Activated naive CD8-positive, alpha-beta T cell treated with anti-CD3 and anti-CD28 coated beads, Interleukin-2, amount 10 ng/mL, durations not matched to agents 7 days and 5 days (primary cell): ENCODE measurements at regions of chr5 and their contacts with region 1.

Region 1: DNA sequence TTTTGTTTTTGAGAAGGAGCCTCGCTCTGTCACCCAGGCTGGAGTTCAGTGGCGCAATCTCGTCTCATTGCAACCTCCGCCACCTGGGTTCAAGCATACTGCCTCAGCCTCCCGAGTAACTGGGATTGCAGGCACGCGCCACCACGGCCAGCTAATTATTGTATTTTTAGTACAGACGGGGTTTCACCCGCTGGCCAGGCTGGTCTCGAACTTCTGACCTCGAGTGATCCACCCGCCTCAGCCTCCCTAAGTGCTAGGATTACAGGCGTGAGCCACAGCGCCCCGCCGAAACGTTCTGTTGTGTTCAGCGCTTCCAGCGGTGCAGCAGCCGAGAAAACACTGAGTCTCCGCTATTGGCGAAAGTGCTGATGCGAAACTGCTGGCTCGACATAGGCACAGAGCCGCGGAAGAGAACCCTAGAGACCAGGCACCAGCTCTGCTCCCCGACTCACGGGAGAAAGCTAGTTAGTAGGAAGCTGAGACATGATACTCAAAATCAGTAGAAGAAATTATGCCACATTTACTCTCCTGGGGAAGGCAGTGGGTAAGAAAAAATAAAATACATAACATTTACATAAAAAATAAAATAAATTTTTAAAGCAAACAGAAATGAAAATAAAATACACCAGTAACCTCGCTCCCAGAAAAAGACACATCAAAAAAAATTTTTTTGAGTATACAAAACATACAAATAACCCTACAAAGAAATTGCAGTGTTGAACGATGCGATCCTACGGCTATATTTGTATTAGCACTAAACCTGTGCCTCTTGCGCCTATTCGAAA is 31.6 kb downstream of the ANXA2R start:
- DNase-seq: peak; percentile 88
- ATAC-seq: peak; percentile 61
- H3K4me3 Mint-ChIP-seq: peak overlapping the region; percentile 90
- H3K27ac Mint-ChIP-seq: peak overlapping the region; percentile 99
- H3K4me1 Mint-ChIP-seq: peaks cover 35% of the 10 kb centered on the region
- H3K27me3 Mint-ChIP-seq: no peaks in the 10 kb centered on the region

Region 2: GRCh38 chr5:42908509-42909488 is 99.8 kb before region 1 on chr5:
- POLR2A ChIA-PET with region 1: interaction called, 19 read pairs
- DNase-seq: peak; percentile 84
- ATAC-seq: peak; percentile 91
- H3K4me3 Mint-ChIP-seq: peak overlapping the region; percentile 82
- H3K27ac Mint-ChIP-seq: peak overlapping the region; percentile 55
- H3K4me1 Mint-ChIP-seq: peaks cover 11% of the 10 kb centered on the region
- H3K27me3 Mint-ChIP-seq: peaks cover 24% of the 10 kb centered on the region

Region 3: GRCh38 chr5:42982107-42982622 is 26.4 kb before region 1 on chr5:
- POLR2A ChIA-PET with region 1: no interaction called
- DNase-seq: no peak
- ATAC-seq: no peak
- H3K4me3 Mint-ChIP-seq: no peak overlapping the region
- H3K27ac Mint-ChIP-seq: no peak overlapping the region
- H3K4me1 Mint-ChIP-seq: peaks cover 18% of the 10 kb centered on the region
- H3K27me3 Mint-ChIP-seq: no peaks in the 10 kb centered on the region

Region 4: DNA sequence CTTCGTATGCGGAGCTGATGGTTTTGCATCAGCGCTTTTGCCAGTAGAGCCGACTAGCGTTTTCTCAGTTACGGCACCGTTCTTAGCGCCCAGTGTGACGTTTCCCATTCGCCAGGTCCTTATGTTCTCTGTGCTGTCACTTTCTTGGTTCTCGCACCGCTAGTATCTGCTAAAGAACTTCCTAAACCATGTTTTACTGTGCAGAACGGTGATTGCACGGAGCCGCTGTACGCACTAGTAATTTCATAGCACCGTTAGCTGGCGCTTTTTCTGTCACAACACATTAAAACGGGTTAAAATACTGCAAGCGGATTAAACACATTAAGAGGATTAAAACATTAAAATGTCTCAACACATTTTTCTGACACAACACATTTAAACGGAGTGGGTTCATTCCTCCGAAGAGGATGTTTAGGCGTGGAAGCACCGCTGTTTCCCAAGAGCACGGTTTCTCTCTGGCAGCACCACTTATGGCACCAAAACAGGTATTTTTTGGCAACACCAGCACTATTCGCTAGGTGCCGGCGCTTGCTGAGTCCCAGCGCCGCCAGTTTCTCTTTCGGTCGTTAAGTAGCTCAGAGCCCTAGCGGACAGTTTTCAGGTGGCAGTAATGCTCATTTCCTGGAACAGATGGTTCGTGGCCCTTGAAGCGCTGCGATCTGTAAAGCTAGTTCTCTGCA is 11.2 kb after region 1 on chr5:
- POLR2A ChIA-PET with region 1: interaction called, 262 read pairs
- DNase-seq: peak; percentile 75
- ATAC-seq: peak; percentile 72
- H3K4me3 Mint-ChIP-seq: peak overlapping the region; percentile 97
- H3K27ac Mint-ChIP-seq: peak overlapping the region; percentile 100
- H3K4me1 Mint-ChIP-seq: peaks cover 27% of the 10 kb centered on the region
- H3K27me3 Mint-ChIP-seq: no peaks in the 10 kb centered on the region

Region 5: DNA sequence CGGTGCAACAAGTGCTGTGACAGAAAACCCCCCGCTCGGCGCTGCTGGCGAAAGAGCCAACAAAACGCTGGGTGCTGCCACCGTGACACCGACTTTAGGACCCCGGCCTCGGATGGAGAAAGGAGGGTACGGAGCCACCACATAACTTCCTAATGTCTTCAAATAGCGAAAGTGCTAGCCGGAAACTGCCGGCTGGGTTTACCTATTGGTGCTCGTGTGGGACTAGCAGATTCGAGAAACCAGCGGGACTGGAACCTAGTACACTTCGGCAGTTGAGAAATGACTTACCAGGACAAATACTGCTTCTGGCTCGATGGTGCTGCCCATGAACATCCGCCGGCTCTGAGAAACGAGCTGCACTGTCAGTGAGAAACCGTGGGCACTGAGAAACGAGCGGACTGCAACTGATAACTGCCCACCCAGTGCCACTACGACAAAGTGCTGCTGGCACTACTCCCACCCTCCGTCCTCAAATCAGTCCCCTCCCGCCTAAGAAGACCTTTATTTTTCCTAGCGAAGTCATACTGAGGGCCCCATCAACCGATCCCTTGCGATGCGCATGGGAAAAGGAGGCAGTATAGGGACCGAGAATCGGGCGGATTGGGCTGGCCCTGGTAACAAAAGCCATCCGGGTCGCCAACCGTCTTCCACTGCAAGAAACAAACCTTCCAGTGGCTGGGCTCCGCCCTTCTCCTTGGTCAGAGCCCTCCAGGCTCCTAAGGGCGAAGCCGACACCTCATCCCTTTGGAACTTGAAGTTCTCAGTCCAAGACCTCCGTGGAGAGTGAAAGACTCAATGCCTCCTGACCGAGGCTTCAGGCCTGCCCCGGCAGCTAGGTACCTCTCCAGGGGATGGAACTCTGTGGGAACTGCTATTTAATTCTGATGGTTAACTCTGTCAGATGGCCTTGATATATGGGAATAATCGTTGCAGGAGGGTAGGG is 58.5 kb after region 1 on chr5:
- POLR2A ChIA-PET with region 1: interaction called, 59 read pairs
- DNase-seq: peak; percentile 85
- ATAC-seq: peak; percentile 39
- H3K4me3 Mint-ChIP-seq: peak overlapping the region; percentile 99
- H3K27ac Mint-ChIP-seq: peak overlapping the region; percentile 100
- H3K4me1 Mint-ChIP-seq: peaks cover 30% of the 10 kb centered on the region
- H3K27me3 Mint-ChIP-seq: no peaks in the 10 kb centered on the region

Region 6: GRCh38 chr5:43105369-43106289 is 97.1 kb after region 1 on chr5:
- POLR2A ChIA-PET with region 1: no interaction called
- DNase-seq: peak; percentile 86
- ATAC-seq: peak; percentile 97
- H3K4me3 Mint-ChIP-seq: peak overlapping the region; percentile 85
- H3K27ac Mint-ChIP-seq: peak overlapping the region; percentile 82
- H3K4me1 Mint-ChIP-seq: peaks cover 31% of the 10 kb centered on the region
- H3K27me3 Mint-ChIP-seq: no peaks in the 10 kb centered on the region